Activated CD4-positive, alpha-beta memory T cell treated with anti-CD3 and anti-CD28 coated beads for 36 hours (primary cell): ENCODE measurements at regions of chr2 and their contacts with region 1.

Region 1: DNA sequence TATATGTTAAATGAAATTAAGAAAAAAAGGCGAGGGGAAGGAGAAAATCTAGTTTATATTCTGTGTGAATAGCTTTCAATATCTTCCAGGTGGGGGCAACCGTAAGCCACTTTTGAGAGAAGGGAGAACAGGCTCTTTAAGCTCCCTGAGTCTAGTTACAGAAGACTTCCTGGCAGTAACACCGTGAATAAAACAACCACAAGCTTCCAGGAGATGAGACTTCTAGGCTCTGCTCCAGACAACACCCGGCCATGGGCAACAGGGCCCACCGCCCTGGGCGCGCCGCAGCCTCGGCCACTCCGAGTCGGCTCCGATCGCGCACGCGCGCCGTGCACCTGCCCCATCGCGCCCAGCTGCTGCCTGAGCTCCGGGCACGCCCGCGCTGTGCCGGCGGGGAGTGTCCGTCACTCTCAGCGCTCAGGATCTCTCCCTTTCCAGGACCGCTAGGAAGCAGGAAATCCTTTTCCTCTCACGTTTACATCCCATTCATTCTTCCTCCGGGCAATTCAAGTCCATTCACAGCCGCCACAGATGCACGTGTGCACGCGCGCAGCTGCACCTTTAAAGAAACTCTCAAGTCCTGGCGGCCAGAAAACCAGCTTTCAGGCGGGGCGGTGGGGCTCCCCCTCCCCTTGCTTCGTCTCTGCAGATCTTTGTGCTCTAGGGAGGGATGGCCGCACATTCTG is 19.4 kb upstream of the PAX3 start:
- DNase-seq: peak; percentile 64
- H3K4me3 Mint-ChIP-seq: peak overlapping the region; percentile 69
- H3K27ac Mint-ChIP-seq: no peak overlapping the region
- H3K4me1 Mint-ChIP-seq: peaks cover 9% of the 10 kb centered on the region
- H3K27me3 Mint-ChIP-seq: peaks cover 45% of the 10 kb centered on the region

Region 2: GRCh38 chr2:222424729-222425671 is 106.8 kb after region 1 on chr2:
- CTCF ChIA-PET with region 1: interaction called, 12 read pairs
- POLR2A ChIA-PET with region 1: interaction called, 8 read pairs
- intact Hi-C with region 1: loop called (anchors 1 kb)
- DNase-seq: peak; percentile 72
- H3K4me3 Mint-ChIP-seq: peak overlapping the region; percentile 90
- H3K27ac Mint-ChIP-seq: peak overlapping the region; percentile 85
- H3K4me1 Mint-ChIP-seq: peaks cover 61% of the 10 kb centered on the region
- H3K27me3 Mint-ChIP-seq: peaks cover 7% of the 10 kb centered on the region

Region 3: DNA sequence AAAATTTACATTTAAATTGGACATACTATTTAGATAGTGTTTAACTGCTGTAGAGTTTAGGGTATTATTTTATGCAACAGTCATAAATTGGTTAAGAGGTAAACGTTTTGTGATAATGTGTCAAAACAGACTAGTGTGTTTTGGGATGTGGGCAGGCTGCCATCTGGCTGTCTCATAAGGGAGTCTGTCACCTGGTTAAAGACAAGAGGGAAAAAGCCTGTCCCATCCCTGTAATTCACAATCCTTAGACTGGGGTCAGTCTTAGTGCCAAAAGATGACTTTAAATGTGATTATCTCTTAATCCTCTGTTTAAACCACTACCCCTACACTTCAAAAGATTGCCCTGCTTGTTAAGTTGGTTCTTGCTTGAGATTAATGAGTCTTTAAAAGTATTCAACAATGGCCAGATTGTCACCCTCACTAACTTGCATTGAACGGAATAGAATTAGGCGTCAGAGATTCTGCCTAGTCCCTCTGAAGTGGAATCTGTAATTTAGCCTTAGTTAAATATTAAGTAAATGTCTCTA is 165.4 kb after region 1 on chr2:
- CTCF ChIA-PET with region 1: interaction called, 5 read pairs
- POLR2A ChIA-PET with region 1: no interaction called
- intact Hi-C with region 1: loop called (anchors 1 kb)
- DNase-seq: peak; percentile 15
- H3K4me3 Mint-ChIP-seq: no peak overlapping the region
- H3K27ac Mint-ChIP-seq: no peak overlapping the region
- H3K4me1 Mint-ChIP-seq: peaks cover 17% of the 10 kb centered on the region
- H3K27me3 Mint-ChIP-seq: no peaks in the 10 kb centered on the region

Region 4: DNA sequence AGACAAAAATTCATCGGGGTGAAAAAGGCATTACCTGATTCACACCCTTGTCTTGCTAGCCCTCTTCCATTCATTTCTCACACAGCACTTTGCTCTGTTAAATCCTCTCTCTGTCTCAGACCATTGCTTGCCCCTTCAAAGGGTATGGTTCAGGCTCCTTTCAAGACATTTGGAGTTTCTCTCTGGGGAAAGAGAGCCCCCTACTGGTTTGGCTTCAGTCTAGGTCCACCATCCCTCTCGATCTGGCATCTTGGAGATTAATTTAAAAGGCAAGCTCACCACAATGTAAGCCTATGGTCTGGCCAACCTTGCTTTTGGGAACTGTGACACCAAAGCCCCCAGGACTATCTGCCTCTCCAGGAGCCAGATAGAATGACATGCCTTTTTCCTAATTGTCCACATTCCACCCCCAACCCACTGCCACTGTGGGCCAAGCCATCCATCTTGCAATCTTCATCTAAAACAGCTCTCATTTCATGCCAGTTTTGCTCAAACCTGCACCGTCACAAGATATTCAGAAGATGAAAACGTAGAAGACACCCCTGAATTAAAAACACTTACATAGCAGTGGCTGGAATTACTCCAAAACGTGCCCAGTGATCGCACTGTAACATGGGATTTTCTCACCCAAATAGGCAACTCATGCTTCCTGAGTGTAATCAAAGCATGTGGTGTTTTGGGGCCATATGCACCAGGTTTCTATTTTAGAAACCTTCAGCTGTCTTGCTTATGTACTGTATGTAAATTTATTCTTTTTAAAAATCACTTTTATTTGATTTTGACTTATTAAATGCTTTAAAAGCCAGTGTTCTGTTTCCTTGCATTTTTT is 243.9 kb after region 1 on chr2:
- CTCF ChIA-PET with region 1: interaction called, 84 read pairs
- POLR2A ChIA-PET with region 1: no interaction called
- intact Hi-C with region 1: loop called (anchors 1 kb)
- DNase-seq: peak; percentile 49
- H3K4me3 Mint-ChIP-seq: no peak overlapping the region
- H3K27ac Mint-ChIP-seq: no peak overlapping the region
- H3K4me1 Mint-ChIP-seq: no peaks in the 10 kb centered on the region
- H3K27me3 Mint-ChIP-seq: no peaks in the 10 kb centered on the region

Region 5: DNA sequence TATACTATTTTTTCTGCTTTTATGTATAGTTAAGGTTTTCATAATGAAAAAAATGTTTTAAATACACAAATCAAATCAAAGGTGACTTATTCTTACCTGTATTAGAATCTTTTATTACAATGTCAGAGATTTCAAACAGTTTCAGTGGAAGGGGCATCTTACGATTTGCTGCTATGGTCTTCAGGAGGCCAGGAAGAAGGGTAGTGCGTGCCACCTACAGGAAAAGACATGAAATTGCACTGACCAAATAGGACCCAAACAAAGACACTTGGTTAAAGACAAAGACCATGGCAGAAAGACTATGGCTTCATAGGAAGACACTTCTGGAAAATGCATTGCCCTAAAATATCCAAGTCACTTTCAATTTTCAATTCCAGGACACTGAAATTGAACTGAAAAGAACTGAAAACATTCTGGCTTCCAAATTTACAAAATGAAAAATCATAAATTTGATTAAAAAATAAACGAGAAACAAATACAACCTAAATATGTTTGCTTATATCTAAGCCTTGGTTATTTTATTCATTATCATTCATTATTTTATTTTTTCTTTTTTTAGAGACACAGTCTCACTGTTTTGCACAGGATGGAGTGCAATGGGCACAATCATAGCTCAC is 295.7 kb after region 1 on chr2:
- CTCF ChIA-PET with region 1: interaction called, 24 read pairs
- POLR2A ChIA-PET with region 1: no interaction called
- intact Hi-C with region 1: loop called (anchors 1 kb)
- DNase-seq: no peak
- H3K4me3 Mint-ChIP-seq: no peak overlapping the region
- H3K27ac Mint-ChIP-seq: no peak overlapping the region
- H3K4me1 Mint-ChIP-seq: no peaks in the 10 kb centered on the region
- H3K27me3 Mint-ChIP-seq: no peaks in the 10 kb centered on the region